A673 (cell line): ENCODE measurements at regions of chr13 and their contacts with region 1.

Region 1: GRCh38 chr13:39942552-39943273 is 287.3 kb downstream of the COG6 start:
- DNase-seq: peak; percentile 90
- H3K4me3 ChIP-seq: no peak overlapping the region
- H3K27ac ChIP-seq: no peak overlapping the region
- H3K4me1 ChIP-seq: peaks cover 4% of the 10 kb centered on the region
- H3K27me3 ChIP-seq: no peaks in the 10 kb centered on the region
- CTCF ChIP-seq: peak; percentile 100

Region 2: DNA sequence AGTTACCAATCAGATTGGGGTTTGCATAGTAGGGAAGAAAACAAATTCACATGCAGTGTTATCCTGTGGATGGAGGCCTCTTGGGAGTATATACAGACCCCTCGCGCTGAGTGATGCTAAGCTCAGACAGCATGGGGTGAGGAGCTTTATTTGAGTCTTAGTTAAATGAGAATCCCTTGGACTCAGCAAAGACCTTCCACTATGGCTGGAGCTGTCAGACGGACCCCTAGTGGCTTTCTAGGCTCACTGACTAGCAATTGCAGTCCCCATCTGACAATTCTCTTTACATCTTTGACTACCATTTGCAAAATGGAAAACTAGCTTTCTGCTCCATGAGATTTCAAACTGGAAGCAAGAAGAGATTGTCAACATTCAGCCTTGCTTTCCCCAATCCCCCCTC is 1042.5 kb before region 1 on chr13:
- CTCF ChIA-PET with region 1: no interaction called
- POLR2A ChIA-PET with region 1: no interaction called
- intact Hi-C with region 1: no loop called
- DNase-seq: peak; percentile 54
- H3K4me3 ChIP-seq: no peak overlapping the region
- H3K27ac ChIP-seq: no peak overlapping the region
- H3K4me1 ChIP-seq: no peaks in the 10 kb centered on the region
- H3K27me3 ChIP-seq: no peaks in the 10 kb centered on the region
- CTCF ChIP-seq: peak; percentile 59

Region 3: GRCh38 chr13:39777527-39778061 is 165.1 kb before region 1 on chr13:
- CTCF ChIA-PET with region 1: interaction called, 4 read pairs
- POLR2A ChIA-PET with region 1: no interaction called
- intact Hi-C with region 1: loop called (anchors 5 kb)
- DNase-seq: peak; percentile 68
- H3K4me3 ChIP-seq: no peak overlapping the region
- H3K27ac ChIP-seq: no peak overlapping the region
- H3K4me1 ChIP-seq: no peaks in the 10 kb centered on the region
- H3K27me3 ChIP-seq: no peaks in the 10 kb centered on the region
- CTCF ChIP-seq: peak; percentile 59

Region 4: GRCh38 chr13:40060296-40061007 is 117.7 kb after region 1 on chr13:
- CTCF ChIA-PET with region 1: no interaction called
- POLR2A ChIA-PET with region 1: no interaction called
- intact Hi-C with region 1: loop called (anchors 5 kb)
- DNase-seq: peak; percentile 87
- H3K4me3 ChIP-seq: no peak overlapping the region
- H3K27ac ChIP-seq: no peak overlapping the region
- H3K4me1 ChIP-seq: peaks cover 50% of the 10 kb centered on the region
- H3K27me3 ChIP-seq: no peaks in the 10 kb centered on the region
- CTCF ChIP-seq: no peak